Activated CD4-positive, alpha-beta T cell treated with anti-CD3 and anti-CD28 coated beads for 36 hours (primary cell): ENCODE measurements at regions of chr5 and their contacts with region 1.

Region 1: DNA sequence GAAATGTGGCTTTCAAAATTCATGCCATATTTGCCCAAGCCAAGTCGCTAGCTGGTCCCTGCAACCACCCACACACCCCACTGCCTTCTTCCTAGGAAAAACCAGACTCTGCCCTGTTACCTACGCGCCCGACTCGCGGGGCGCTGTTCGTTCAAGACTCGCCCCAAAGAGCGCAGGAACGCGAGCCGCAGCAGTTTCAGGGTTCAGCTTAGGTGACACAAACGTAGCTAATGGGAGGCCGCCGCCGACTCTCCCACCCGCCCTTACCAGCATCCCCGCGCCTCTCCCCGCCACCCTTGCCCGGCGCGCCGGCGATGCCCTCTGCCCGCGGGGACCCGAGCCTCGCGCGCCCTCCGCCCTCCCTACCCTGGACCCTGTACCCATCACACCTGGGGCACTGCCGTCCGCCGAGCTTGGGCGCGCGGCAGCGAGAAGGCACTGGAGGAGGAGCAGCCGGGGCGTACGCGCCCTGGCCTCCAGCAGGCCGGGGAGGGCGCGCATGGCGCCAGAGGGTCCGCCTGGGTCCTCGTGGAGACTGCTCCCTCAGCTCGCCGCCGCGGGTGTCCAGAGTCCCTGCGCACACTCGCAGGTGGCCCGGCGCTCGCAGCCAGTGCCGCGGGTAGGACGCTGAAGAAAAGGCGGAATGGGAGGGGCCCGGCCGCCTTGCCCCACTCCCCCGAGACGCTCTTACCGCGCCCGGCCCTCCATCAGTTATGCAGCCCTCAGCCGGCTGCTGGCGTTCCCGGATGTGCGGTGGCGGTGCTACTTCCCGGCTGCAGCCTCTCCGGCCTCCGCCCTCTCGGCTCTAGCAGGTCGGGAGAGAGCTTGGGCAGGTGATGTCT is at the start of gene EMB:
- DNase-seq: peak; percentile 89
- ATAC-seq: peak; percentile 78
- H3K4me3 Mint-ChIP-seq: peak within 1 kb of the TSS; percentile 90
- H3K27ac Mint-ChIP-seq: peak within 1 kb of the TSS; percentile 93
- H3K4me1 Mint-ChIP-seq: peaks cover 69% of the 10 kb centered on the region
- H3K27me3 Mint-ChIP-seq: no peaks in the 10 kb centered on the region
- total RNA-seq, gene EMB: 37.4 to 53.0 TPM

Region 2: DNA sequence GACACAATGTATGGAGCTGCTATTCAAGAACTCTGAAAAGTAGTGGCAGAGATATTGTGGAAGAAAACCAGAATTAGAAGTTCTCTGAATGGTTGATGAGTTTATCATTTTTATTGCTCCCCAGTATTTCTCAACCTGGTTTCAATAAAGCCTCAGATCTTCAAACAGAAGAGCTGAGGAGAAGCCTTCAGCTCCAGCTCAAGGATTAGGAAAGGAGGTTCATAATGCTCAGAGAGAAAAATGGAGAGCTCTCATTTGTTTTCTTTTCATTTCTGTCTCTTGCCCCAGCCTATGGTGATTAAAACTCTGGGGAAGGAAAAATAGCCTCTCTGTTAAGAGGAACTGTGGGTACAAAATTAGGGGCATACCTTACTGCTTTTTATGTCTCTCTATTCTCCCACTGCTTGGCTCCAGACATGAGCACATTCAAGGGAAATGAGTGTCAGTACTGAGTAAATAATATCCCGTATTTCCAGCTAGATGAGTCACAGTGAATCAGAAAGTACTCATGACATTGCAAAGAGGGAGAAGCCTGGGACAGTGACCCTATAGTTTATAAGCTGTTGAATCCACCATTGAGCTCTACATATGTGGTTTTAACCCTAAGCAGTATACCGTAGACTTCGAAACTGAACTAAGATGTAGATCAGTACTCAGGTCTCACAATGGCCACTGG is 137.9 kb before region 1 on chr5:
- CTCF ChIA-PET with region 1: no interaction called
- POLR2A ChIA-PET with region 1: no interaction called
- intact Hi-C with region 1: no loop called
- DNase-seq: no peak
- ATAC-seq: no peak
- H3K4me3 Mint-ChIP-seq: no peak overlapping the region
- H3K27ac Mint-ChIP-seq: no peak overlapping the region
- H3K4me1 Mint-ChIP-seq: no peaks in the 10 kb centered on the region
- H3K27me3 Mint-ChIP-seq: no peaks in the 10 kb centered on the region

Region 3: DNA sequence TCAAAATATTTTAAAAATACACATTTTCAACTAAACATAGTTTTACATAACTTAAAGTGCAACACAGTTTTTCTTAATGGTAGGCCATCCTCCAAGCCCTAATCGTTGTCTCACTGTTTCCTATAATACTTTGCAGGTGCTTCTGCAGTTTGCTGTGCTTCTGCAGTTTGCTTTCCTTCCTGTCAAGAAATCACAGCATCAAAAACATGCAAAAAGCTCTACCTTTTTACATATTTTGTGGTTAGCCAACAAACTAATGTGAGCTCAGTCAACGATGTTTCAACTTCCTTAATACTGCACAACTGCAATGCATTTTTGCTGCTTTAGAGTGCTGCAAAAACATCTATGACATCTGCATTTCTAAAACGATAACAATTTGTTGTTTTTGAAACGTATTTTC is 25.0 kb before region 1 on chr5:
- CTCF ChIA-PET with region 1: no interaction called
- POLR2A ChIA-PET with region 1: no interaction called
- intact Hi-C with region 1: no loop called
- DNase-seq: no peak
- ATAC-seq: peak; percentile 47
- H3K4me3 Mint-ChIP-seq: no peak overlapping the region
- H3K27ac Mint-ChIP-seq: no peak overlapping the region
- H3K4me1 Mint-ChIP-seq: peaks cover 76% of the 10 kb centered on the region
- H3K27me3 Mint-ChIP-seq: no peaks in the 10 kb centered on the region

Region 4: GRCh38 chr5:50501491-50502228 is 60.8 kb after region 1 on chr5:
- CTCF ChIA-PET with region 1: no interaction called
- POLR2A ChIA-PET with region 1: no interaction called
- intact Hi-C with region 1: loop called in 1 of 2 experiments (anchors 5 kb)
- DNase-seq: no peak
- ATAC-seq: peak; percentile 82
- H3K4me3 Mint-ChIP-seq: no peak overlapping the region
- H3K27ac Mint-ChIP-seq: no peak overlapping the region
- H3K4me1 Mint-ChIP-seq: peaks cover 10% of the 10 kb centered on the region
- H3K27me3 Mint-ChIP-seq: no peaks in the 10 kb centered on the region

Region 5: DNA sequence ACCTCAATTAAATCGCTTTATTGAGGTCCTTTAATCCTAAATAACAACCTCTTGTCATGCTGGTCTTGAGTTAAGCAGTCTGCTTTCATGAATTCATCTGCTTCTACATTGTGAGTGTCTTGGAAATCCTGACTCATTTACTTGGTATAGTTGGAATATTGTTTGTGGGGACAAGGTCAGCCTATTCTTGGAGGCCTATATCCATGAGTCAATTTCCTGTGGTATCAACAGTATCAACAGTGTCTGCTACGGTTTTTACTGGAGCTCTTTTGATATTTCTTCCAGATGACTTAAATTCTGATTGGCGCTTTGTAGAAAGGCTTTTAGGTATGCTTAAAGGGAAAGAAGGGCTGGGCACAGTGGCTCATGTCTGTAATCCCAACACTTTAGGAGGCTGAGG is 154.3 kb after region 1 on chr5:
- CTCF ChIA-PET with region 1: no interaction called
- POLR2A ChIA-PET with region 1: no interaction called
- intact Hi-C with region 1: loop called (anchors 2 to 5 kb)
- DNase-seq: peak; percentile 20
- ATAC-seq: peak; percentile 66
- H3K4me3 Mint-ChIP-seq: no peak overlapping the region
- H3K27ac Mint-ChIP-seq: peak overlapping the region; percentile 69
- H3K4me1 Mint-ChIP-seq: peaks cover 47% of the 10 kb centered on the region
- H3K27me3 Mint-ChIP-seq: no peaks in the 10 kb centered on the region

Region 6: GRCh38 chr5:50667653-50668595 is 227.1 kb after region 1 on chr5:
- CTCF ChIA-PET with region 1: no interaction called
- POLR2A ChIA-PET with region 1: interaction called, 4 read pairs
- intact Hi-C with region 1: loop called (anchors 1 to 5 kb)
- DNase-seq: peak; percentile 92
- ATAC-seq: peak; percentile 70
- H3K4me3 Mint-ChIP-seq: peak overlapping the region; percentile 85
- H3K27ac Mint-ChIP-seq: peak overlapping the region; percentile 99
- H3K4me1 Mint-ChIP-seq: peaks cover 40% of the 10 kb centered on the region
- H3K27me3 Mint-ChIP-seq: no peaks in the 10 kb centered on the region

Region 7: GRCh38 chr5:50711273-50711672 is 270.4 kb after region 1 on chr5:
- CTCF ChIA-PET with region 1: interaction called, 4 read pairs
- POLR2A ChIA-PET with region 1: no interaction called
- intact Hi-C with region 1: loop called in 1 of 2 experiments (anchors 5 kb)
- DNase-seq: peak; percentile 72
- ATAC-seq: peak; percentile 95
- H3K4me3 Mint-ChIP-seq: peak overlapping the region; percentile 65
- H3K27ac Mint-ChIP-seq: peak overlapping the region; percentile 92
- H3K4me1 Mint-ChIP-seq: peaks cover 82% of the 10 kb centered on the region
- H3K27me3 Mint-ChIP-seq: no peaks in the 10 kb centered on the region

Region 8: GRCh38 chr5:50744776-50745175 is 303.9 kb after region 1 on chr5:
- CTCF ChIA-PET with region 1: no interaction called
- POLR2A ChIA-PET with region 1: no interaction called
- intact Hi-C with region 1: loop called in 1 of 2 experiments (anchors 5 kb)
- DNase-seq: no peak
- ATAC-seq: peak; percentile 57
- H3K4me3 Mint-ChIP-seq: peak overlapping the region; percentile 73
- H3K27ac Mint-ChIP-seq: peak overlapping the region; percentile 91
- H3K4me1 Mint-ChIP-seq: peaks cover 64% of the 10 kb centered on the region
- H3K27me3 Mint-ChIP-seq: no peaks in the 10 kb centered on the region

Region 9: DNA sequence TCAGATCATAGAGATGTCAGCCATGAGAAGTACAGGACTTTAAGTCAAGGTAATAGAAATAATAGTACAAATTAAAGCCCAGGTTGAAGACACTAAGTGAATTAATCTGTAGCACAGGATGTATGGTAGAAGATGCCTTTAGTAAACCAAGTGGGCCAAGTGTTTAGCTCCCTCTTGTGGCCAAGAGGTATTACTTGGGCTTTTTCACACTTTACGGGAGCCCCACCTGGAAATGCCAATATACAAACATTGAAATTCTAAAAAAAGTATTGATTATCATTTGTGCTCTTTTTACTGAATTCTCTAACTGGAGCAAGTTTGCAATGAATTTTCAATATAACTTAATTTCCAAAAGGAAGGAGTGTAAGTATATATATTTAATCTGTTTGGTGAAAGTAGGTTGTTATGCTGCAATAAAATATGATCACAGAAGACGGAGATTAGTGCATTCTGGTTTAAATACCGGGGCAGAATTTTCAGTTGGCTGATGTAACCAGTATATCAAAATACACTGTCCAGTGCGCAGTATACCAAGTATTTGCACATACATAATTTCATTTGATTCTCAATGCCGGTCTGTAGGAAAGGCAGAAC is 310.3 kb after region 1 on chr5:
- CTCF ChIA-PET with region 1: interaction called, 3 read pairs
- POLR2A ChIA-PET with region 1: no interaction called
- intact Hi-C with region 1: loop called in 1 of 2 experiments (anchors 2 kb)
- DNase-seq: peak; percentile 58
- ATAC-seq: peak; percentile 91
- H3K4me3 Mint-ChIP-seq: no peak overlapping the region
- H3K27ac Mint-ChIP-seq: peak overlapping the region; percentile 58
- H3K4me1 Mint-ChIP-seq: peaks cover 41% of the 10 kb centered on the region
- H3K27me3 Mint-ChIP-seq: no peaks in the 10 kb centered on the region

Region 10: GRCh38 chr5:51345106-51345505 is 904.2 kb after region 1 on chr5:
- CTCF ChIA-PET with region 1: no interaction called
- POLR2A ChIA-PET with region 1: no interaction called
- intact Hi-C with region 1: no loop called
- DNase-seq: no peak
- ATAC-seq: no peak
- H3K4me3 Mint-ChIP-seq: no peak overlapping the region
- H3K27ac Mint-ChIP-seq: no peak overlapping the region
- H3K4me1 Mint-ChIP-seq: no peaks in the 10 kb centered on the region
- H3K27me3 Mint-ChIP-seq: no peaks in the 10 kb centered on the region